ENCODE measurements at regions of chr22 and their contacts with region 1.

Region 1: GRCh38 chr22:35299673-35300497 is at the start of gene TOM1:
- DNase-seq: peak; percentile 96 to 97
- H3K4me3 ChIP-seq: peak within 1 kb of the TSS; percentile 70
- H3K4me3 Mint-ChIP-seq: peak within 1 kb of the TSS; percentile 91
- H3K27ac Mint-ChIP-seq: peak within 1 kb of the TSS; percentile 96
- H3K4me1 ChIP-seq: peaks cover 3% of the 10 kb centered on the region; the same call in 1 of the 2 replicates
- H3K4me1 Mint-ChIP-seq: no peaks in the 10 kb centered on the region
- H3K27me3 ChIP-seq: no peaks in the 10 kb centered on the region
- H3K27me3 Mint-ChIP-seq: no peaks in the 10 kb centered on the region
- CTCF ChIP-seq: no peak
- total RNA-seq, gene TOM1: 43.3 and 47.4 TPM in 2 replicates

Region 2: GRCh38 chr22:35266280-35266679 is 33.6 kb before region 1 on chr22:
- CTCF ChIA-PET with region 1: no interaction called
- POLR2A ChIA-PET with region 1: no interaction called
- intact Hi-C with region 1: no loop called
- DNase-seq: no peak
- H3K4me3 ChIP-seq: no peak overlapping the region
- H3K4me3 Mint-ChIP-seq: no peak overlapping the region
- H3K27ac Mint-ChIP-seq: no peak overlapping the region
- H3K4me1 ChIP-seq: no peaks in the 10 kb centered on the region
- H3K4me1 Mint-ChIP-seq: no peaks in the 10 kb centered on the region
- H3K27me3 ChIP-seq: no peaks in the 10 kb centered on the region
- H3K27me3 Mint-ChIP-seq: no peaks in the 10 kb centered on the region
- CTCF ChIP-seq: no peak

Region 3: GRCh38 chr22:35310556-35311550 is 11.0 kb after region 1 on chr22:
- CTCF ChIA-PET with region 1: interaction called, 9 read pairs
- POLR2A ChIA-PET with region 1: interaction called, 13 read pairs
- intact Hi-C with region 1: no loop called
- DNase-seq: peak; percentile 42 to 58
- H3K4me3 ChIP-seq: peak overlapping the region; percentile 17
- H3K4me3 Mint-ChIP-seq: peak overlapping the region; percentile 45
- H3K27ac Mint-ChIP-seq: peak overlapping the region; percentile 40
- H3K4me1 ChIP-seq: peaks cover 30% of the 10 kb centered on the region
- H3K4me1 Mint-ChIP-seq: peaks cover 19% of the 10 kb centered on the region
- H3K27me3 ChIP-seq: no peaks in the 10 kb centered on the region
- H3K27me3 Mint-ChIP-seq: no peaks in the 10 kb centered on the region
- CTCF ChIP-seq: no peak